ENCODE measurements at regions of chr6 and their contacts with region 1.

Region 1: GRCh38 chr6:31541658-31542521 is at the start of gene DDX39B:
- DNase-seq: peak; percentile 95 to 97 (median 96)
- H3K4me3 ChIP-seq: peak within 1 kb of the TSS; percentile 96 to 97
- H3K4me3 Mint-ChIP-seq: peak within 1 kb of the TSS; percentile 96 to 99 (median 98)
- H3K27ac ChIP-seq: peak within 1 kb of the TSS; percentile 94
- H3K27ac Mint-ChIP-seq: peak within 1 kb of the TSS; percentile 94 to 100 (median 99)
- H3K4me1 ChIP-seq: peaks cover 48% of the 10 kb centered on the region
- H3K4me1 Mint-ChIP-seq: peaks cover 38 to 63% (median 51%) of the 10 kb centered on the region in 4 donors
- H3K27me3 ChIP-seq: no peaks in the 10 kb centered on the region
- H3K27me3 Mint-ChIP-seq: no peaks in the 10 kb centered on the region
- total RNA-seq, gene DDX39B: 729 to 737 TPM

Region 2: DNA sequence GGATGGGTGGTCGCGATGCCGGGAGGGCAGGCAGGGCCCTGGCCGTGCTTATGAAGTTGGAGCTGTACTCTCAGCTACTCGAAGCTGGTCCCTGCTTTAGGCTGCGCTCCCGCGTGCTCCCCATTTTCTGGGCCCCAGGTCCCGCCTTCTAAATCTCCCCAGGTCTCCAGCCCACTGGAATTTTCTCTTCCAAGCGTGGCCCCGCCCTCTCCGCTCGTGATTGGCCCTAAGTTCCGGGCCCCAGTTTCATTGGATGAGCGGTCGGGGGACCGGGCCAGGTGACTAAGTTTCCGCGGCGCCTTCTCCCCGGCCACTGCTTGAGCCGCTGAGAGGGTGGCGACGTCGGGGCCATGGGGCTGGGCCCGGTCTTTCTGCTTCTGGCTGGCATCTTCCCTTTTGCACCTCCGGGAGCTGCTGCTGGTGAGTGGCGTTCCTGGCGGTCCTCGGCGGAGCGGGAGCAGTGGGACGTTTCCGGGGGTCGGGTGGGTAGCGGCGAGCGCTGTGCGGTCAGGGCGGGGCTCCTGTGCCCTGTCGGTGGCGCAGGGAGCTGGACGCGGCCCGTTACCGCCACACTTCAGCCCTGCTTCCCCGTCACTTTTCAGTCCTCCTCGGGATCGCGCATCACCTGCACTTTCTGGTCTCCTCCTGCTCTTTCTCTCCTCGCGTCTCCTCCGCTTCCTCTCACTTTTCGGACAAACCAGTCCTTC is 138.5 kb before region 1 on chr6 and contains the start of gene MICA:
- CTCF ChIA-PET with region 1: no interaction called
- POLR2A ChIA-PET with region 1: interaction called, 11 read pairs
- intact Hi-C with region 1: loop called (anchors 2 kb)
- DNase-seq: peak; percentile 50 to 79 (median 54)
- H3K4me3 ChIP-seq: peak within 1 kb of the TSS; percentile 36 to 69
- H3K4me3 Mint-ChIP-seq: peak within 1 kb of the TSS; percentile 86 to 98 (median 97)
- H3K27ac ChIP-seq: peak within 1 kb of the TSS; percentile 76
- H3K27ac Mint-ChIP-seq: peak within 1 kb of the TSS; percentile 75 to 97 (median 91)
- H3K4me1 ChIP-seq: peaks cover 78% of the 10 kb centered on the region
- H3K4me1 Mint-ChIP-seq: peaks cover 55 to 93% (median 70%) of the 10 kb centered on the region in 4 donors
- H3K27me3 ChIP-seq: no peaks in the 10 kb centered on the region
- H3K27me3 Mint-ChIP-seq: no peaks in the 10 kb centered on the region
- total RNA-seq, gene MICA: 18.5 to 21.2 TPM

Region 3: DNA sequence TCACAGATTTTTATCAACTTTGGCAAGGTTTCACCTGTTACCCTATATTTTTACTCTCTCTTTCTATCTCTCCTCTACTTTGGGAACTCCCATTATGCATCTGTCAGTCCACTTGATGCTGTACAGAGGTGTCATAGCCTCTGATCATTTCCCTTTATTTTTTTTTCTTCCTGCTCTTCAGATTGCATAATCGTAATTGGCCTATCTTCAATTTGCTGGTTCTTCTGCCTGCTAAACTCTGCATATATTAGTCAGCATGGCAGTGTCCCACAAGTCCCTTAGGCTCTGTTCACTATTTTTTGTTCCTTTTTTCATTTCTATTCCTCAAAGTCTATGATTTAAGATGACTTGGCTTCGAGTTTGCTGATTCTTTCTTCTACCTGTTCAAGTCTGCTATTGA is 88.6 kb before region 1 on chr6:
- CTCF ChIA-PET with region 1: no interaction called
- POLR2A ChIA-PET with region 1: no interaction called
- intact Hi-C with region 1: no loop called
- DNase-seq: no peak
- H3K4me3 ChIP-seq: no peak overlapping the region
- H3K4me3 Mint-ChIP-seq: no peak overlapping the region
- H3K27ac ChIP-seq: no peak overlapping the region
- H3K27ac Mint-ChIP-seq: peak overlapping the region in 1 of 7 donors; percentile 35
- H3K4me1 ChIP-seq: no peaks in the 10 kb centered on the region
- H3K4me1 Mint-ChIP-seq: no peaks in the 10 kb centered on the region
- H3K27me3 ChIP-seq: peaks cover 7% of the 10 kb centered on the region
- H3K27me3 Mint-ChIP-seq: peaks cover 7 to 8% of the 10 kb centered on the region in 2 donors

Region 4: DNA sequence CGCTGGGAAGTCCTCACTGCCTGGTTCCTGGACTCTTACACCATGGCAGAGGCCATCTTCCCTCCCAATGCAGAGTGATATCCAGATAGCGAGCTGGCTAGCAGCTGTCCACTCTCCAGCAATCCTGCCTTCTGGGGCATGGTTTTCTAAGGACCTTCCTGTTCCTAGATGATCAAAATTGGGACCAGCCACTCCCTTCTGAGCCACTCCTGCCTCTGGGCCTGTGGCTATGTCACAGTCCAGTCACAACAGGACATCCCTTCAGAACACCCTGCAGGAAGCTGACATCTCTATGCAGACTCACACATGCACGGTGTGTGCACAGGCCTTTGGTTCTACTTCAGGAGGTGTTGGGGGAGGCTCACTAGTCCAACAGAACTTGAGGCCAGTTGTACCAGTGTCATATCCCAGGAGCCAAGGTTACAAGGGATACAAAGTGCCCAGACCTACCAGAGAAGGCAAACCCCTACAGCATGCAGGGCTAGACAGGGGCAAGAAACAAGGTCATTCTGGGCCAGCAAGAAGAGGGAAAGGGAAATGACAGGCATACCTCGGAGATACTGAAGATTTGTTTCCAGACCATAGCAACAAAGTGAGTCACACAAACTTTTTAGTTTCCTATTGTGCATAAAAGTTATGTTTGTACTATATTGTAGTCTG is 15.8 kb before region 1 on chr6:
- CTCF ChIA-PET with region 1: interaction called, 5 read pairs
- POLR2A ChIA-PET with region 1: interaction called, 38 read pairs
- intact Hi-C with region 1: no loop called
- DNase-seq: no peak
- H3K4me3 ChIP-seq: no peak overlapping the region
- H3K4me3 Mint-ChIP-seq: no peak overlapping the region
- H3K27ac ChIP-seq: no peak overlapping the region
- H3K27ac Mint-ChIP-seq: peak overlapping the region in 3 of 7 donors; percentile 24 to 49 (median 42)
- H3K4me1 ChIP-seq: no peaks in the 10 kb centered on the region
- H3K4me1 Mint-ChIP-seq: peaks cover 0 to 6% (median 3%) of the 10 kb centered on the region in 4 donors
- H3K27me3 ChIP-seq: no peaks in the 10 kb centered on the region
- H3K27me3 Mint-ChIP-seq: peaks cover 0 to 2% of the 10 kb centered on the region in 2 donors

Region 5: DNA sequence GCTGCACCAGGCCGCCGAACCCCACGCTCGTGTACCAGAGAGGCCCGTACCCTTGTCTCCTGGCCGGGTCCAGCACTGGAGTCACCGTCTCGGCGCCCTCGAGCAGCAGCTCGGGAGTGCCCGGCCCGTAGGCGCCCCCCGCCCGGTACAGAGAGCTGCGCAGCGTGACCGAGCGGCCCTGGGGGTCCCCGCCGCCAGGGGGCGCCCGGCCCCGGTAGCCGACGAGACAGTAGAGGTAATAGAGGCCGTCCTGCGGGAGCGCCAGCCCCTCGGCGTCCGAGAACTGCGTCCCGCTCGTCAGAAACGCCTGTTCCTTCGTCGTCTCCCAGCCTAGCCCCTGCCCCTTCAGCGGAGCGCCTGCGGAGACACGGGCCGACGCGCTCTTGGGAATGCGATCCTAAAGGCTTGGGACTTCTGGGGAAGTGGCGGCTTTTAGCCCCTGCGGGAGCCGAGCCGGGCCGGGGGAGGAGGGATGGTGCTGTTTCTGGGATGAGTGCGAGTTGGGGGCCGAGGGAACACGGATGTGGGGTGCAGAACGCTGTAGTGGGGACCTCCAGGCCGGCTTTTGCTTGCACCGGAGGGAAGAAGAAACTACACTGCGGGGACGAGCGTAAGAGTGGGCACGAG is 39.0 kb after region 1 on chr6:
- CTCF ChIA-PET with region 1: interaction called, 595 read pairs
- POLR2A ChIA-PET with region 1: interaction called, 3,597 read pairs
- intact Hi-C with region 1: loop called (anchors 1 kb)
- DNase-seq: peak; percentile 83 to 89 (median 85)
- H3K4me3 ChIP-seq: peak overlapping the region; percentile 89 to 95
- H3K4me3 Mint-ChIP-seq: peak overlapping the region; percentile 95 to 100 (median 99)
- H3K27ac ChIP-seq: peak overlapping the region; percentile 92
- H3K27ac Mint-ChIP-seq: peak overlapping the region; percentile 96 to 100 (median 99)
- H3K4me1 ChIP-seq: peaks cover 71% of the 10 kb centered on the region
- H3K4me1 Mint-ChIP-seq: peaks cover 32 to 95% (median 53%) of the 10 kb centered on the region in 4 donors
- H3K27me3 ChIP-seq: no peaks in the 10 kb centered on the region
- H3K27me3 Mint-ChIP-seq: no peaks in the 10 kb centered on the region

Region 6: GRCh38 chr6:31660381-31661261 is 118.7 kb after region 1 on chr6 and contains the start of gene C6orf47:
- CTCF ChIA-PET with region 1: no interaction called
- POLR2A ChIA-PET with region 1: interaction called, 10 read pairs
- intact Hi-C with region 1: loop called (anchors 1 kb)
- DNase-seq: peak; percentile 64 to 76 (median 66)
- H3K4me3 ChIP-seq: peak within 1 kb of the TSS; percentile 71 to 83
- H3K4me3 Mint-ChIP-seq: peak within 1 kb of the TSS; percentile 86 to 93 (median 92)
- H3K27ac ChIP-seq: peak within 1 kb of the TSS; percentile 84
- H3K27ac Mint-ChIP-seq: peak within 1 kb of the TSS; percentile 88 to 95 (median 91)
- H3K4me1 ChIP-seq: peaks cover 61% of the 10 kb centered on the region
- H3K4me1 Mint-ChIP-seq: peaks cover 48 to 87% (median 66%) of the 10 kb centered on the region in 4 donors
- H3K27me3 ChIP-seq: no peaks in the 10 kb centered on the region
- H3K27me3 Mint-ChIP-seq: no peaks in the 10 kb centered on the region
- total RNA-seq, gene C6orf47: 37.5 to 39.9 TPM